OCI-LY7 (cell line): ENCODE measurements at regions of chr17 and their contacts with region 1.

Region 1: GRCh38 chr17:65055348-65056261 is 935 bp downstream of the GNA13 start:
- DNase-seq: peak; percentile 59
- H3K4me3 ChIP-seq: peak overlapping the region; percentile 76
- H3K27ac ChIP-seq: peak overlapping the region; percentile 84
- H3K4me1 ChIP-seq: peaks cover 60% of the 10 kb centered on the region
- CTCF ChIP-seq: no peak

Region 2: GRCh38 chr17:64975329-64976087 is 80.1 kb before region 1 on chr17:
- CTCF ChIA-PET with region 1: no interaction called
- POLR2A ChIA-PET with region 1: interaction called, 8 read pairs
- intact Hi-C with region 1: loop called (anchors 2 kb)
- DNase-seq: peak; percentile 97
- H3K4me3 ChIP-seq: peak overlapping the region; percentile 77
- H3K27ac ChIP-seq: peak overlapping the region; percentile 99
- H3K4me1 ChIP-seq: peaks cover 87% of the 10 kb centered on the region
- CTCF ChIP-seq: no peak

Region 3: DNA sequence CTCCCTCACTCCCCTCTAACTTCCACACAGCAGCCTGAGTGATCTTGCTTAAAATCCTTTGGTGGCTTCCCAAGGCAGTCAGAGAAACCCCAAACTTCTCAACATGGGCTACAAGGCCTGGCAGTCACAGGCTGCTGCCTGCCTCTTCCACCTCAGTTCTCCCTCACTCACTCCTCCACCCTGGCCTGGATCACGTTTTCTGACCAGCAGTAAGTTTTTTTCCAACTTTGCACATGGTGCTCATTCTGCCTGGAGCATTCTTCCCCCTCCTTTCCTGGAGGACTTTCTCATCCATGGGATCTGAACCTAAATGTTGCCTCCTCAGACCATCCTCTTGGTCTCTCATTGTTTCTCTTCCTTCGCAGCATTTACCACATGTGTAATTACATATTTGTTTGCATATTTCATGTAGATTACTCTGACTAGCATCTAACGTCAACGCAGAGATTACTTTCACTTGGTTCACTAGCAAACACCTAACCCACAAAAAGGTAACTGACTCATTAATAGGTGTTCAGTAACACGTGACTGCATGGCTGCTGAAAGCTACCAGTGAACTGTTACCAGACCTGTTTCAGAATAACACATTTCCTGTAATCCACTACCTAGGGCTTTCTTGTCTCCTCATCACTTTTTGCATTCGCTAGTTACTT is 16.1 kb before region 1 on chr17:
- CTCF ChIA-PET with region 1: interaction called, 8 read pairs
- POLR2A ChIA-PET with region 1: interaction called, 19 read pairs
- intact Hi-C with region 1: loop called (anchors 2 kb)
- DNase-seq: peak; percentile 72
- H3K4me3 ChIP-seq: peak overlapping the region; percentile 57
- H3K27ac ChIP-seq: peak overlapping the region; percentile 89
- H3K4me1 ChIP-seq: peaks cover 100% of the 10 kb centered on the region
- CTCF ChIP-seq: no peak

Region 4: DNA sequence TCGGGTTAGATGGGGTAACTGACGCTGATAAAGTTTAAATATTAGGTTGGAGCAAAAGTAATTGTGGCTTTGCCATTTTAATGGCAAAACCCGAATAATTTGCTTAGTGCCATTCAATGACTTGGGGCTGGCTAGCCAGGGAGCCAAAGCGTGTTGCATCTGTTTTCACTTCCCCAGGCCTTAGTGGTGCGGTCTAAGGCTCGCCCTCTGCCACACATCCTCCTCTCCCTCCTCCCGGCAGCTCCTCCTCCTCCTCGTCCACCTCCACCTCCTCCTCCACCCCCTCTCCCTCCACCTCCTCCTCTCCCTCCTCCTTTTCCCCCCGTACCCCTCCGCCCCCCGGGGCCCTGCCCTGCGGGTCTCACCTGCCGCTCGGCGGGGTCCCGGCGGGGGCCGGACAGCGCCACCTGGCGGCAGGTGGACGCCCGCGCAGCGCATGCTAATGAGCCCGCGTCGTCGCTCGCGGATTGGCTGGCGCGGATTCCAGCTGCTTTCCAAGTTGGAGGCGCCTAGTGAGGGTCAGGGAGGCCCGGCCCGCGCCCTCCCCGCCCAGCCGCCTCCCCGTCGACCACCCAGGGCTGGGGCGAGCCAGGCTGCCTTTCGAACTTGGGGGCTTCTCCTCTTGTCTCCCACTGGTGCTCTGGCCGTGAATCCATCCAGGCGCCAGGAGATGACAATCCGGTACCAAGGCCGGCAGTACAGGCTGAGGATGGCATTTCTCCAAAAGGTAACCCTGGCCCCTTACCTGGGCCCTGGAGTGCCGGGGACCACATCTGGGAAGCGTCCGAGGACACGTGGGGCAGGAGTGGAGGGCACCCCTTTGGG is 44.9 kb after region 1 on chr17:
- CTCF ChIA-PET with region 1: no interaction called
- POLR2A ChIA-PET with region 1: interaction called, 9 read pairs
- intact Hi-C with region 1: loop called (anchors 1 kb)
- DNase-seq: peak; percentile 91
- H3K4me3 ChIP-seq: peak overlapping the region; percentile 73
- H3K27ac ChIP-seq: peak overlapping the region; percentile 81
- H3K4me1 ChIP-seq: peaks cover 41% of the 10 kb centered on the region
- CTCF ChIP-seq: peak; percentile 91

Region 5: DNA sequence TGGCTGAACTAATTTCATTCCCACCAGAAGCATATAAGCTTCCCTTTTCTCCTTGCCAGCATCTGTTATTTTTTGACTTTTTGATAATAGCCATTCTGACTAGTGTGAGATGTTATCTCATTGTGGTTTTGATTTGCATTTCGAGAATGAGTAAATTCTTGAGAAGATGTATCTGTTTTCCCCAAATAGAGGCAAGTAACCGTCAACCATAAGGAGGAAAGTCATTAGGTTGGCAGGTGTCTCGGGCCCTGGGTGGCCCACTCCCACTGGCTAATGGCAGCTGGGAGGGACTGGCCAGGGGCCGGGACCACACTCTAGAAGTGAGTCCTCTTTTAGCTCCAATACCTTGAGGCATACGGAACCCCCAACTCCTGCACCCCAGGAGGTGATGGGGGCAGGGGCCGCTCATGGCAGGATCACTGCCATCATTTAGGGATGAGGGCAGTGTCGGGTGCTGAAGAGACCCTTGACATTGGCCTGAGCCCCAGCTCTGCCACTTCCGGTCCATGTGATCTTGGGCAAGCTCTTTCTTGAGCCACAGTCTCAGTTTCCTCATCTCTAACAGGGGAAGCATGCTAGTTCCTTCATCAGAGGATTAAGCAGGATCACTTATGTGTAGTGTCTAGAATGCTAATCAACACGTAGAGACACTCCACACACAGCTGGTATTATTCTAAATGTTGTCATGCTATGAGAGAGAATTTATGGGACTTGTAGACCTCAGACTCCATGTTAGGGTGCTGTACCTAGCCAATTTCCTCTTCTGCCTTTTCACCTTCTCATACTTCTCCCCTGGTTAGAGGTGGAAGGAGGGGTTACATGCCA is 125.8 kb after region 1 on chr17:
- CTCF ChIA-PET with region 1: no interaction called
- POLR2A ChIA-PET with region 1: interaction called, 4 read pairs
- intact Hi-C with region 1: loop called (anchors 5 kb)
- DNase-seq: peak; percentile 74
- H3K4me3 ChIP-seq: peak overlapping the region; percentile 42
- H3K27ac ChIP-seq: peak overlapping the region; percentile 96
- H3K4me1 ChIP-seq: peaks cover 88% of the 10 kb centered on the region
- CTCF ChIP-seq: no peak

Region 6: DNA sequence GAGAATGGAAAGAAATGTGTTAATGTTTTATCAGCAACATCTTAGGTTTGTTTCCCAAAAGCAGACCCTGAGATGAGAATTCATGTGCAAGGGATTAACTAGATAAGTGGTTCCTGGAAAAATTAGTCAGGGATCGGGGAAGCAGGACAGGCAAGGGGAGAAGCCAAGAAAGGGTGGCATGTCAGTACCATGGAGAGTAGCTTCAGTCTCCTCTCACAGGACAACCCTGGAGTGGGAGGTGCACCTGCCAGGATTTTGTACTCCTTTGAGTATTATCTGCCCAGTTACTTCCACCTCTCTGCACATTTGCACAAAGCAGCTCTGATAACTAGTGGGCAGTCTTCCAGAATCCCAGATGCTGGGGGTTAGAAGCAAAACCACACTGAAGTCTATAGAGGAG is 198.6 kb after region 1 on chr17:
- CTCF ChIA-PET with region 1: no interaction called
- POLR2A ChIA-PET with region 1: no interaction called
- intact Hi-C with region 1: no loop called
- DNase-seq: no peak
- H3K4me3 ChIP-seq: no peak overlapping the region
- H3K27ac ChIP-seq: no peak overlapping the region
- H3K4me1 ChIP-seq: no peaks in the 10 kb centered on the region
- CTCF ChIP-seq: no peak

Region 7: DNA sequence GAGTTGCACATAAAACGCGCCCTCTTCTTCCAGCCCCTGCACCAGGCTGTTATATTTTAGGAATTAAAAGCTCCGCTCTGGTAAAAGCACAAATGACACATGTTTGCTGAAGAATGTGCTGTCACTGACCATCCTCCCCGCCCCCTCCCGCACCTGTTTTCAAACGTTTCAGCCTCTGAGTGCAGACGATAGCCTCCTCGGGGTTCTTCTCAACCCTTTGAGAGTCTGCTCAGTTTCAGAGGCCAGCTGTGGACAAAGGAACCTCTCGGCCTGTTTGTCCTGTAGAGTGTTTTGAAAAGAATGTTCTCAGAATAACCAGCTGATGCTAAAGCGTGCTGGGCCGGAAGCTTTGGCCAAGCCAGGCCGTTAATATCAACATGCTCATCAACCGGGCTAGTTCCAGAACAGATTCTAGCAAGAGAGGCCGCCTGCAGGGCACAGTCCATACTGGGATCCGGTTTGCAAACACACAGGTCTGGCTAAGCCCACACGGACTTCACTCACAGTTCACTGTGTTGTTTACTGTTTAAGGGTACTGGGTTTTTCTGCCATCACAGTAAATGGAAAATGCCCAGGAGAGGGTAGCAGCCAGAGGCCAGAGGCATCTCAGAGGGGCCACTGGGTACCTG is 1902.5 kb after region 1 on chr17:
- CTCF ChIA-PET with region 1: interaction called, 14 read pairs
- POLR2A ChIA-PET with region 1: no interaction called
- intact Hi-C with region 1: no loop called
- DNase-seq: no peak
- H3K4me3 ChIP-seq: no peak overlapping the region
- H3K27ac ChIP-seq: no peak overlapping the region
- H3K4me1 ChIP-seq: no peaks in the 10 kb centered on the region
- CTCF ChIP-seq: no peak